ENCODE measurements at regions of chr17 and their contacts with region 1.

Region 1: GRCh38 chr17:64262417-64263260 is at the start of gene TEX2:
- DNase-seq: peak; percentile 63 to 78
- ATAC-seq: peak; percentile 60
- total RNA-seq, gene TEX2: 32.9 to 36.4 TPM

Region 2: DNA sequence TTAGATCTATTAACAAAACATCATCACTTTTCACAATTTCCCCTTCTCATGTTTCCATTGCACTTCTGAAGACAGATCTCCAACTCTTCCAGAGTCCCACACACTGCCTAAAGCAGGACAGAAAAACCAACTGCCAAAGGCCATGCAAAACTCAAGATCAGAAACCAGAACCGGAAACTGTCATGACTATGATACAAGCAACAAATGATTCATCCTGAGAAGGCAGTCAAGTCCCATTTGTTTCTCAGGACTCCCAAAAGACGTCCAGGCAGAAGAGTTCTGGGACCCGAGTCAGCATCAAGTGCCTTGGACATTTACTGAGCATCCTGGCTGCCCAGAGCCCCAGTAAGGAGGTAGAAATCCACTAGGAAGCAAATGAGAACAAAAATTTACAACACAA is 171.5 kb before region 1 on chr17:
- intact Hi-C with region 1: no loop called
- DNase-seq: no peak
- ATAC-seq: no peak

Region 3: GRCh38 chr17:64138441-64138840 is 124.2 kb before region 1 on chr17:
- intact Hi-C with region 1: no loop called
- DNase-seq: no peak
- ATAC-seq: no peak

Region 4: GRCh38 chr17:64155751-64156544 is 106.7 kb before region 1 on chr17:
- intact Hi-C with region 1: loop called in 1 of 2 experiments (anchors 10 kb)
- DNase-seq: peak in 1 of 2 donors; percentile 55
- ATAC-seq: peak; percentile 87